ENCODE measurements at regions of chr11 and their contacts with region 1.

Region 1: DNA sequence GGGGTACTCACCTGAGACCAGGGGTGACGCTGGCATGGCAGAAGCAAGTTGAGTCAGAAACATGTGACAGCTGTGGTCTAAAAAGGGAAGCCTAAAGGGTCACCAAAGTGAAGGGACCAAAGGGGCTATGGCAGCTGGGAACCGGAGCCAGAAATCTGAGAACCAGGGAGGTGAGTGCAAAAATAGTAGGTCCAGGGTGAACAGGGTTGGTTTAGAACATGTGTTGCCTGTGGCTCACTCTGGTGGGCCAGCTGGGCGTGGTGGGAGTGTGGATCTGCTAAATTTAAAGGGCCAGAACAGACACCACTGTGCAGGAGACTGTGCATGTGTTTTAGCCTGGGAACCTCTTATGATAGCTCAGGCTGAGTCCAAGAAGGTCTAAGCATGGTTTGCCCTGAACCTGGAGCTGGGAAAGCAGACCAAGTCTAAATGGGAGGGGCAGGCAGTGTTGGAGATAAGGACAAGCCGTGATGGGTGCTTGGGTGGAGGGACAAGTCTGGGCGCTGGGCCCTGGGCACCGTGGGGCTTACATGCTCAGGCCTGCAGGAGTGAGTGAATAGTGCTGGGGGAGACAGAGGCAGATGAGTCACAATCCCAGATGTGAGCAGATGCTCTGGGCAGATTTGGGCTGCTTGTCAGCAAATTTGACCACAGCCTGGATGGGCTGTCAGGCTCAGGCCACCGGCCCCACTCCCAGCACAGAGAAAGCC is 41.4 kb upstream of the ZBED5 start:
- DNase-seq: peak; percentile 99
- H3K4me3 ChIP-seq: peak overlapping the region in 2 of 3 experiments; percentile 1 to 19
- H3K27ac ChIP-seq: peak overlapping the region; percentile 96
- H3K4me1 ChIP-seq: peaks cover 38% of the 10 kb centered on the region
- H3K27me3 ChIP-seq: no peaks in the 10 kb centered on the region
- CTCF ChIP-seq: no peak

Region 2: DNA sequence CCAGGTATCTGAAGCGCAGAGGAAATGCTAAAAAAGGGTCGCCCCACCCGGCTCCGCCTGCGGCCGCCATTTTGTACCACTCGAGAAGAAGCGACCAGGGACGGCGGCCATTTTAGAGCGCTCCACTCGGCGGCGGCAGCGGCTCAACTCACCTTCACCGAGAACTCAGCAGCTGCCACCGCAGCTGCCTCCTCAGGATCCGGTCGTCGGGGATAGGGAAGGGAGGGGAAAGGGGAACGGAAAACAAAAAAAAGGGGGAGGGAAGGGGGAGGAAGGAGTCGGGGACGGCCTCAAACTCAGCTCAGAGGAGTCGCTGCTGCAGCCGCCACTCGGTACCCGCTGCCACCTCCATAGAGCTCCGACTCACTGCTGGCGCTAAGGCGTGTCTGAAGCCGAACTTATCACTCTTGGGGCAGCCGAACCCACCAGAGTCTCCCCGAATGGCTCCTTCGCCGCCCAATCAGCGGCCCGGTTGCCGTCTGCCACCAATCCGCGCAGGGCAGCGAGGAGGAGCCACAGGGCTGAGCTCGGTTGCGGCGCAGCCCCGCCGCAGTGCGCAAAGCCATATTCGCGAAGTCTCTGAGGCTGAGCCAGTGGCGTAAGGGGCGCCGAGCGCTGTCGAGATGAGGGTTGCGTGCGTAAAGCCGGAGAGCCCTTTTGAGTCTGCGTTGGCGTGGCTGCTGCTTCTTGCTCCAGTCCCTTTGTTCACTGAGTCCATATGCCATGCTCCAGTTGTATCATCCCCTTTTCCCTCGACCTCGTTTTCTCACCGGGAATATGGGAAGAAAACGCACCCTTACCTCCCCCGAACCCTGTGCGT is 90.5 kb before region 1 on chr11 and contains the start of gene EIF4G2:
- CTCF ChIA-PET with region 1: no interaction called
- dilution Hi-C with region 1: loop called (anchors 5 kb)
- in situ Hi-C with region 1: no loop called
- intact Hi-C with region 1: loop called (anchors 1 kb)
- DNase-seq: peak; percentile 99
- H3K4me3 ChIP-seq: peak within 1 kb of the TSS; percentile 64 to 89 (median 86)
- H3K27ac ChIP-seq: peak within 1 kb of the TSS; percentile 83
- H3K4me1 ChIP-seq: peaks cover 23% of the 10 kb centered on the region
- H3K27me3 ChIP-seq: no peaks in the 10 kb centered on the region
- CTCF ChIP-seq: no peak
- total RNA-seq, gene EIF4G2: 737 to 956 TPM

Region 3: GRCh38 chr11:10878408-10879214 is 20.7 kb before region 1 on chr11:
- CTCF ChIA-PET with region 1: interaction called, 12 read pairs
- dilution Hi-C with region 1: no loop called
- in situ Hi-C with region 1: no loop called
- intact Hi-C with region 1: loop called (anchors 2 kb)
- DNase-seq: peak; percentile 52
- H3K4me3 ChIP-seq: no peak overlapping the region
- H3K27ac ChIP-seq: no peak overlapping the region
- H3K4me1 ChIP-seq: peaks cover 4% of the 10 kb centered on the region
- H3K27me3 ChIP-seq: no peaks in the 10 kb centered on the region
- CTCF ChIP-seq: peak; percentile 81 to 84